ENCODE measurements at regions of chr16 and their contacts with region 1.

Region 1: GRCh38 chr16:87278191-87279095 is 38.7 kb downstream of the C16orf95 start:
- DNase-seq: peak; percentile 90
- ATAC-seq: peak; percentile 95
- H3K4me3 Mint-ChIP-seq: peak overlapping the region; percentile 28; the same call in 1 of the 2 replicates
- H3K27ac Mint-ChIP-seq: no peak overlapping the region
- H3K4me1 Mint-ChIP-seq: peaks cover 3% of the 10 kb centered on the region; the same call in 1 of the 2 replicates
- H3K27me3 Mint-ChIP-seq: no peaks in the 10 kb centered on the region; the same call in 1 of the 2 replicates
- CTCF ChIP-seq: peak; percentile 77

Region 2: GRCh38 chr16:86563489-86564345 is 714.7 kb before region 1 on chr16:
- CTCF ChIA-PET with region 1: interaction called, 16 read pairs
- POLR2A ChIA-PET with region 1: no interaction called
- DNase-seq: peak; percentile 93
- ATAC-seq: peak; percentile 27
- H3K4me3 Mint-ChIP-seq: peak overlapping the region; percentile 62
- H3K27ac Mint-ChIP-seq: no peak overlapping the region
- H3K4me1 Mint-ChIP-seq: peaks cover 20% of the 10 kb centered on the region
- H3K27me3 Mint-ChIP-seq: peaks cover 66% of the 10 kb centered on the region
- CTCF ChIP-seq: peak; percentile 98

Region 3: GRCh38 chr16:87190288-87191230 is 87.9 kb before region 1 on chr16:
- CTCF ChIA-PET with region 1: interaction called, 11 read pairs
- POLR2A ChIA-PET with region 1: no interaction called
- DNase-seq: no peak
- ATAC-seq: no peak
- H3K4me3 Mint-ChIP-seq: no peak overlapping the region
- H3K27ac Mint-ChIP-seq: no peak overlapping the region
- H3K4me1 Mint-ChIP-seq: no peaks in the 10 kb centered on the region
- H3K27me3 Mint-ChIP-seq: peaks cover 4% of the 10 kb centered on the region
- CTCF ChIP-seq: no peak

Region 4: GRCh38 chr16:87233926-87234325 is 44.5 kb before region 1 on chr16:
- CTCF ChIA-PET with region 1: interaction called, 11 read pairs
- POLR2A ChIA-PET with region 1: no interaction called
- DNase-seq: peak; percentile 34
- ATAC-seq: peak; percentile 51
- H3K4me3 Mint-ChIP-seq: no peak overlapping the region
- H3K27ac Mint-ChIP-seq: no peak overlapping the region
- H3K4me1 Mint-ChIP-seq: no peaks in the 10 kb centered on the region
- H3K27me3 Mint-ChIP-seq: no peaks in the 10 kb centered on the region
- CTCF ChIP-seq: no peak

Region 5: GRCh38 chr16:87263471-87263961 is 14.9 kb before region 1 on chr16:
- CTCF ChIA-PET with region 1: interaction called, 25 read pairs
- POLR2A ChIA-PET with region 1: no interaction called
- DNase-seq: no peak
- ATAC-seq: no peak; the same call in 1 of the 2 replicates
- H3K4me3 Mint-ChIP-seq: no peak overlapping the region
- H3K27ac Mint-ChIP-seq: no peak overlapping the region
- H3K4me1 Mint-ChIP-seq: peaks cover 8% of the 10 kb centered on the region
- H3K27me3 Mint-ChIP-seq: peaks cover 3% of the 10 kb centered on the region; the same call in 1 of the 2 replicates
- CTCF ChIP-seq: no peak

Region 6: GRCh38 chr16:87297918-87298631 is 19.6 kb after region 1 on chr16:
- CTCF ChIA-PET with region 1: interaction called, 31 read pairs
- POLR2A ChIA-PET with region 1: no interaction called
- DNase-seq: peak; percentile 82
- ATAC-seq: peak; percentile 87
- H3K4me3 Mint-ChIP-seq: no peak overlapping the region
- H3K27ac Mint-ChIP-seq: no peak overlapping the region
- H3K4me1 Mint-ChIP-seq: no peaks in the 10 kb centered on the region
- H3K27me3 Mint-ChIP-seq: no peaks in the 10 kb centered on the region
- CTCF ChIP-seq: peak; percentile 49

Measured in WTC11 (cell line).